CD4-positive, alpha-beta T cell (primary cell): ENCODE measurements at regions of chr17 and their contacts with region 1.

Region 1: DNA sequence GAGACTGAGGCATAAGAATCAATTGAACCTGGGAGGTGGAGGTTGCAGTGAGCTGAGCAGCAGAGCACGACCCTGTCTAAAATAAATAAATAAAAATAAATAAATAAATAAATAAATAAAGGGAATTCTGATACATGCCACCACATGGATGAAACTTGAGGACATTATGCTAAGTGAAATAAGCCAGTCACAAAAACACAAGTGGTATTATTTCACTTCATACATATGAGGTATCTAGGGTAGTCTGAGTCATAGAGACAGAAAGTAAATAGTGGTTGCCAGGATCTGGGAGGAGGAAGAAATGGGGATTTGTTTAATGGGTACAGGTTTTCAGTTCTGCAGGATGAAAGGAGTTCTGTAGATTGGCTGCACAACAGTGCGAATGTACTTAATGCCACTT is 16.3 kb downstream of the PIPOX start:
- DNase-seq: no peak
- ATAC-seq: no peak
- H3K4me3 ChIP-seq: no peak overlapping the region
- H3K4me3 Mint-ChIP-seq: no peak overlapping the region
- H3K27ac ChIP-seq: no peak overlapping the region
- H3K27ac Mint-ChIP-seq: no peak overlapping the region
- H3K4me1 ChIP-seq: no peaks in the 10 kb centered on the region
- H3K4me1 Mint-ChIP-seq: no peaks in the 10 kb centered on the region
- H3K27me3 ChIP-seq: no peaks in the 10 kb centered on the region
- H3K27me3 Mint-ChIP-seq: no peaks in the 10 kb centered on the region
- CTCF ChIP-seq: no peak

Region 2: DNA sequence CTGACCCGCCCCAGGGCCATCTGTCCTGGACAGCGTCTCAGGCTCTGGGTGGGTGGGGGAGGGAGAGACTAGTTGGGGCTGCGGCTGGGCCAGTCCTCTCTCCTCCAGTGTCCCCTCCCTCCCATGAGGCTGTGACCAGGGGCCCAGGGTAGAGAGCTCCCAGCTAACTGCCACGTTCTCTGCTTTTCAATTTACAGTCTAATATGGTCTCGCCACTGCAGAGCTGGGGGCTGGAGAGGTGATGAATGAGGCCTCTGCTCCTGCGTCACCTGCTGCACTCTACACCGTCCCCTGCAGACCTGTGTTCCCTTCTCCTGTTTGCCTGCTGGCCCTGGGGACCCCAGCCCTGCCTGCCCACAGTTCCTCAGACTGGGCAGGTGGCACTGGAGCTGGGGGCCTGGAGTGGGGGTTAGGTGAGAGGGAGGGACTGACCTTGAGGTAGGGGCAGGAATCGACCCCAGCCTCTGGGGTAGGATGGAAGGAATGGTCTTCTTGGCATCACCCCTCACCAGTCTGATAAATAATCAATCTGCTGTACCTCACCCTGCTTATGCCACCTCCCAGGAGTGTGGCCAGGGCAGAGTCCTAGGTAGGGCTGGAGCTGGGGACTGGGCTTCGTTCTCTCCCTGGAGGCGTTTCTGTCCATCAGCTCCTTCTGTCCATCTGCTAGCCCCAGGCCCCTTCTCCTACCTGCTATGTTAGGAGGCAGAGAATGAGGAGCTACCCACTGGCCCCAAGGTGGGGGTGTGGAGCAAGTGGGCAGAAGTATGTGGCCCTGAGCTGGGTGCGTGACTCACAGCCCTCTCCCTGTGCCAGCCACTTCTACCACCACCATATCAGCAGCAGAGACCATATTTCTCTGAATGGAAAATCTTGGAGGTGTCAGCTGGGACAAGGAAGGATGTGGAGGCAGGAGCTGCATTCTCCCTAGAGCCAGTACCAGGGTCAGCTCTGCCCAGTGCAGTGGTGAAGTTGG is 66.4 kb before region 1 on chr17:
- CTCF ChIA-PET with region 1: no interaction called
- POLR2A ChIA-PET with region 1: no interaction called
- intact Hi-C with region 1: loop called in 1 of 2 experiments (anchors 10 kb)
- DNase-seq: no peak
- ATAC-seq: no peak
- H3K4me3 ChIP-seq: no peak overlapping the region
- H3K4me3 Mint-ChIP-seq: no peak overlapping the region
- H3K27ac ChIP-seq: no peak overlapping the region
- H3K27ac Mint-ChIP-seq: no peak overlapping the region
- H3K4me1 ChIP-seq: no peaks in the 10 kb centered on the region
- H3K4me1 Mint-ChIP-seq: no peaks in the 10 kb centered on the region
- H3K27me3 ChIP-seq: peaks cover 2 to 10% of the 10 kb centered on the region in 2 experiments
- H3K27me3 Mint-ChIP-seq: peaks cover 15% of the 10 kb centered on the region
- CTCF ChIP-seq: no peak